ENCODE measurements at regions of chr3 and their contacts with region 1.

Region 1: DNA sequence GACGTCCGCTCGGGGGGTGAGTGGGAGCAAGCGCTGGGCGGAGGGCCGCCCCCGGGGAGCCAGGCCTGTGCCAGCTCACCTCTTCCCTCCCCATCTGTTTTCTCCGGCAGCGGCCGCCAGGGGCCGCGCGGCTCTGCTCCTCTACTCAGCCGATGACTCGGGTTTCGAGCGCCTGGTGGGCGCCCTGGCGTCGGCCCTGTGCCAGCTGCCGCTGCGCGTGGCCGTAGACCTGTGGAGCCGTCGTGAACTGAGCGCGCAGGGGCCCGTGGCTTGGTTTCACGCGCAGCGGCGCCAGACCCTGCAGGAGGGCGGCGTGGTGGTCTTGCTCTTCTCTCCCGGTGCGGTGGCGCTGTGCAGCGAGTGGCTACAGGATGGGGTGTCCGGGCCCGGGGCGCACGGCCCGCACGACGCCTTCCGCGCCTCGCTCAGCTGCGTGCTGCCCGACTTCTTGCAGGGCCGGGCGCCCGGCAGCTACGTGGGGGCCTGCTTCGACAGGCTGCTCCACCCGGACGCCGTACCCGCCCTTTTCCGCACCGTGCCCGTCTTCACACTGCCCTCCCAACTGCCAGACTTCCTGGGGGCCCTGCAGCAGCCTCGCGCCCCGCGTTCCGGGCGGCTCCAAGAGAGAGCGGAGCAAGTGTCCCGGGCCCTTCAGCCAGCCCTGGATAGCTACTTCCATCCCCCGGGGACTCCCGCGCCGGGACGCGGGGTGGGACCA is 632 bp upstream of the CRELD1 start:
- DNase-seq: peak; percentile 77
- H3K4me3 Mint-ChIP-seq: peak overlapping the region; percentile 90
- H3K27ac Mint-ChIP-seq: peak overlapping the region; percentile 86
- H3K4me1 Mint-ChIP-seq: peaks cover 23% of the 10 kb centered on the region
- H3K27me3 Mint-ChIP-seq: no peaks in the 10 kb centered on the region
- CTCF ChIP-seq: peak; percentile 59

Region 2: GRCh38 chr3:9852549-9852948 is 80.5 kb before region 1 on chr3:
- CTCF ChIA-PET with region 1: interaction called, 31 read pairs
- POLR2A ChIA-PET with region 1: interaction called, 6 read pairs
- intact Hi-C with region 1: loop called (anchors 1 kb)
- DNase-seq: no peak
- H3K4me3 Mint-ChIP-seq: no peak overlapping the region
- H3K27ac Mint-ChIP-seq: peak overlapping the region; percentile 49
- H3K4me1 Mint-ChIP-seq: peaks cover 35% of the 10 kb centered on the region
- H3K27me3 Mint-ChIP-seq: no peaks in the 10 kb centered on the region
- CTCF ChIP-seq: no peak

Region 3: DNA sequence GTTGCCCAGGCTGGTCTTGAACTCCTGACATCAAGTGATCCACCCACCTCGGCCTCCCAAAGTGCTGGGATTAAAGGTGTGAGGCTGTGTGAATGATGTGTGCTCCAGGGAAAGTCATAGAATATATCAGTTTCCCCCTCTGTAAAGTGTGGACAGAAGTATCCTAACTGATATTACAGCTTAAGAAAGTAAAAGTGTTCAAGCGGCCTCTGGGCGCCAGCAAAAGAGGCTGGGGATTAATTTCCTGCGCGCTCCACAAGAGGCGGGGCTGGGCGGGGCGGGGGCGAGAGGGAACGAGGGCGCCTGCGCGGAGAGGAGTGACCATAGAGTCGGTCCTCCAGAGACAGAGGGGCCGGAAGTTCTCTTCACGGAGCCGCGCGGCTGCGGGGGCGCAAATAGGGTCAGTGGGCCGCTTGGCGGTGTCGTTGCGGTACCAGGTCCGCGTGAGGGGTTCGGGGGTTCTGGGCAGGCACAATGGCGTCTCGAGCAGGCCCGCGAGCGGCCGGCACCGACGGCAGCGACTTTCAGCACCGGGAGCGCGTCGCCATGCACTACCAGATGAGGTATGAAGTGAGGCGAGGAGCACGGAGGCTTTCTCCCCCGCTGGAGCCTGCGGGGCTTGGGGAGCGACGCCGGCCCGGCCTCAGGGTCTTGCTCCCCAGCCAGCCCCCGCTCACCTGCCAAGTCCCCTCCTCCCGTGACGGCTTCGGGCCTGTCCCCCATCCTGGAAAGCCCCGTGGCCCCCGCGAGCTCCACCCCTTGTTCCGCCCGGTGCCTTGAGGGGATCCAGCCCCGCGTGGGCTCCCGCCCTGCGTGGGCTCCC is 42.5 kb before region 1 on chr3 and contains the start of gene JAGN1:
- CTCF ChIA-PET with region 1: interaction called, 10 read pairs
- POLR2A ChIA-PET with region 1: interaction called, 27 read pairs
- intact Hi-C with region 1: no loop called
- DNase-seq: peak; percentile 90
- H3K4me3 Mint-ChIP-seq: peak within 1 kb of the TSS; percentile 91
- H3K27ac Mint-ChIP-seq: peak within 1 kb of the TSS; percentile 98
- H3K4me1 Mint-ChIP-seq: peaks cover 45% of the 10 kb centered on the region
- H3K27me3 Mint-ChIP-seq: no peaks in the 10 kb centered on the region
- CTCF ChIP-seq: no peak
- total RNA-seq, gene JAGN1: 49.7 and 55.4 TPM in 2 replicates

Region 4: DNA sequence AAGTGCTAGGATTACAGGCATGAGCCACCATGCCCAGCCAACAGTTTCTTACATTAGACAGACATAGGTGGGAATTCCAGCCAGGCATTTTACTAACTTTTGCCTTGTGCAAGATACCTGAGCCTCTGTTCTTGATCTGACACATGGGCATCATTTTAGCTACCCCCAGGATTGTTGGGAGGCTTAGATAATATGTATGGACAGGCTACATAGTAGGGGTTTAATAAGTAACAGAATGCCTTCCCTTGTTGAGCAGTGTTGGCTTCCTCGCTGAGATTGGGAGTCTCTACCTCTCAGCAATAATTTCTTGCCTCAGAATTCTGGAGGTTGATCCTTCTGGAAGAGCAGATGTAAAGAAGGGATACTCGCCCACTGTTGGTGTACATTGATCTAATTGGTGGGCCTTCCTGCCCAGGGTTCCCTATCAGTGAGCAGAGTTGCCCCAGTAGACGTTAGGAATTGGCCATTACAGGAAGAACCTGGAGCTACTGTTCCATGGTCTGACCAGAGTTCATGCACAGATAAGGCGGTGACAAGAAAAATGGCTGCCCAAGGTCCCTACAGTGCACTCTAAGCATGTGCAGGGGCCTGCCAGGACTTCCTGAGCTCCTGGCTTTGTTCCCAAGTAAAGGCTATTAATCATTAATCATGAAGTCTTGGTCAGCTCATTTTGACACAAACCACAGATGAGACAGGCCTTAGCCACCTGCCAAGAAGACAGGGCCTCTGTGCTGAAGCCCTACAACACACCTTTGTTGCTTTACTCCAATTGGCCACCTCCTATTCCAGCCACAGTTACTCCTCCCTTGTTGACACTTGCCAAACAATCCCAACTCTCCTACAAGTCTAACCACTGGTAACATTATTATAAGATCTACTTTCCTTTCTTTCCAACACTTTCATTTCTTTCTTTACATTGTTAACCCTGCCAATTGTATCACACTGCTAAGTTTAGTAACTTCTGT is 35.3 kb before region 1 on chr3:
- CTCF ChIA-PET with region 1: interaction called, 10 read pairs
- POLR2A ChIA-PET with region 1: interaction called, 14 read pairs
- intact Hi-C with region 1: no loop called
- DNase-seq: peak; percentile 96
- H3K4me3 Mint-ChIP-seq: peak overlapping the region; percentile 33
- H3K27ac Mint-ChIP-seq: peak overlapping the region; percentile 79
- H3K4me1 Mint-ChIP-seq: peaks cover 59% of the 10 kb centered on the region
- H3K27me3 Mint-ChIP-seq: no peaks in the 10 kb centered on the region
- CTCF ChIP-seq: no peak

Region 5: GRCh38 chr3:9970020-9970687 is 37.2 kb after region 1 on chr3:
- CTCF ChIA-PET with region 1: no interaction called
- POLR2A ChIA-PET with region 1: no interaction called
- intact Hi-C with region 1: no loop called
- DNase-seq: peak; percentile 70
- H3K4me3 Mint-ChIP-seq: no peak overlapping the region
- H3K27ac Mint-ChIP-seq: peak overlapping the region; percentile 50
- H3K4me1 Mint-ChIP-seq: peaks cover 10% of the 10 kb centered on the region
- H3K27me3 Mint-ChIP-seq: no peaks in the 10 kb centered on the region
- CTCF ChIP-seq: no peak